ENCODE measurements at regions of chr17 and their contacts with region 1.

Region 1: DNA sequence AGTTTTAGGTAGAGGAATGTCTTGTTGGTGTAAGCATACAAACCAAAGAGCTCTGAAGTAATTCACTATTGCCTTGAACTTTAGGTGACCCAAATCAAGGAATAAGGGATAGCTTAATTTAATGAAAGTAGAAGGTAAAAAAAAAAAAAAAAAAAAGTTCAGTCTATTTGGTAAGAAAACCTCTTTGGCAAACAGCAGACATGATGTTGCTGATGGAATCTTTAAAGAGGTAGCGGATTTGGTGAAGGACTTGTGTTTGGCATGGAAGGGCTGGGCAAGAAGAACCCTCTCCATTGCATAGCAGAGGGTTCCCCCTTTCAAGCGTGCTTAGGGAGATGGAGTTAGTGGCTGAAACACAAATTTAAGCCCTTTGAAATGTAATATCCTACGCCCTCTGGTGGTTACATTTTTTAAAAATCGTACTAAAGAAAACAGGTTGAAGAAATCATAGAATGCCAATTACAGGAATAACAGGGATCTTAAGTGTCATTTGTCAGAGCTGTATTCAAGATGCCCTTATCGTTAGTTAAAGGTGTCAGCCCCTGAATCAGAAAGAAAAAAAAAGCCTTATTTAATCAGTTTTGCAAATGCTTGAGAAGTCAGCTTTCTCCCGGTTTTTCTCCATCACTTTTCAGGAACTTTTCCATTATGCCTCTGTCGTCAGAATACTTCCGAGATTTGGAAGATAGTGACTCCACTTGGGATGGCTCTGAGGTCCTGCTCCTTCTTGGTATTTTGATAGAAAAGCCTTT is 383.1 kb downstream of the KCNJ2 start:
- DNase-seq: no peak
- H3K4me3 Mint-ChIP-seq: no peak overlapping the region
- H3K27ac Mint-ChIP-seq: no peak overlapping the region
- H3K4me1 Mint-ChIP-seq: no peaks in the 10 kb centered on the region
- H3K27me3 Mint-ChIP-seq: no peaks in the 10 kb centered on the region

Region 2: DNA sequence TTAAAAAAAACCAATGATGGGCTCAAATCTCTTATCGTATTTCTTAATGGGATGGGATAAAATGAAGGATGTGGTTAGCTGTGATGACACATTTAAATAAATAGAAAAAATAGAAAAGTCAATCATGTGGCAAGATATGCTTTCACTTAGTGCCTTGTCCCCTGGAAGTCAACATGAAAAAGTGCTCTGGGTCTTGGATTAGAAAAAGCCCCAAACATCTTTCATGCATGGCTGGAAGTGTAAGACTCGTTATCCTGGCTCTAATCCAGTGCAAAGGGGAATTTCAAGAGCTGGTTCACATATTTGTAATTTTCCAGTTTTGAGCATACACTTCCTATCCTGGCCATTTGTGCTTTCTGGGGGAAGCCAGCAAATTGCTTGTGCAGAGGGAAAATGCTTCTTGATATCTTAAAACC is 977.1 kb before region 1 on chr17:
- CTCF ChIA-PET with region 1: interaction called, 16 read pairs
- DNase-seq: no peak
- H3K4me3 Mint-ChIP-seq: no peak overlapping the region
- H3K27ac Mint-ChIP-seq: no peak overlapping the region
- H3K4me1 Mint-ChIP-seq: peaks cover 4% of the 10 kb centered on the region
- H3K27me3 Mint-ChIP-seq: peaks cover 15% of the 10 kb centered on the region

Region 3: GRCh38 chr17:69743091-69743490 is 809.3 kb before region 1 on chr17:
- CTCF ChIA-PET with region 1: no interaction called
- DNase-seq: no peak
- H3K4me3 Mint-ChIP-seq: no peak overlapping the region
- H3K27ac Mint-ChIP-seq: no peak overlapping the region
- H3K4me1 Mint-ChIP-seq: peaks cover 19% of the 10 kb centered on the region
- H3K27me3 Mint-ChIP-seq: no peaks in the 10 kb centered on the region

Region 4: DNA sequence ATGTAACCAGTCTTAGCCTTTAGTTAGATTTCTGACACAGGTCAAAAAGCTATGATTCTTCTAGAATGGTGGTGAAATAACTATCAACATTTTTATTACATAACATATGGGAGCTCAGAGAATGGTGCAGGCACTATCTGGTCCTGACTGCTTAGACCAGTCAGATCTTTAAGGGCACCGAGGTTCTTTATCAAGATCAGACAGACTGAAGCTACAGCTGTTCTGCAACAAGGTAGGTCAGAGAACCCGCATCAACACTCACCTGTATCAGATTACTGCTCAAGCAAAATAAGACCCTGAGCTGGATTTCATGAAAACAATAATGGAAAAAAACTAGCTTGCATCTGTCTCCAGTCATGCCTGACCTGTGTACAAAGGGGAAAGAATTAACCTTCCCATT is 222.7 kb before region 1 on chr17:
- CTCF ChIA-PET with region 1: no interaction called
- DNase-seq: no peak
- H3K4me3 Mint-ChIP-seq: no peak overlapping the region
- H3K27ac Mint-ChIP-seq: no peak overlapping the region
- H3K4me1 Mint-ChIP-seq: no peaks in the 10 kb centered on the region
- H3K27me3 Mint-ChIP-seq: no peaks in the 10 kb centered on the region

Region 5: GRCh38 chr17:70527364-70527888 is 25.0 kb before region 1 on chr17:
- CTCF ChIA-PET with region 1: no interaction called
- DNase-seq: no peak
- H3K4me3 Mint-ChIP-seq: no peak overlapping the region
- H3K27ac Mint-ChIP-seq: no peak overlapping the region
- H3K4me1 Mint-ChIP-seq: no peaks in the 10 kb centered on the region
- H3K27me3 Mint-ChIP-seq: no peaks in the 10 kb centered on the region